ENCODE measurements at regions of chr2 and their contacts with region 1.

Region 1: GRCh38 chr2:176638167-176639015 is 369.1 kb downstream of the MTX2 start:
- DNase-seq: peak; percentile 82
- H3K27ac ChIP-seq: peak overlapping the region; percentile 70
- CTCF ChIP-seq: peak; percentile 84

Region 2: DNA sequence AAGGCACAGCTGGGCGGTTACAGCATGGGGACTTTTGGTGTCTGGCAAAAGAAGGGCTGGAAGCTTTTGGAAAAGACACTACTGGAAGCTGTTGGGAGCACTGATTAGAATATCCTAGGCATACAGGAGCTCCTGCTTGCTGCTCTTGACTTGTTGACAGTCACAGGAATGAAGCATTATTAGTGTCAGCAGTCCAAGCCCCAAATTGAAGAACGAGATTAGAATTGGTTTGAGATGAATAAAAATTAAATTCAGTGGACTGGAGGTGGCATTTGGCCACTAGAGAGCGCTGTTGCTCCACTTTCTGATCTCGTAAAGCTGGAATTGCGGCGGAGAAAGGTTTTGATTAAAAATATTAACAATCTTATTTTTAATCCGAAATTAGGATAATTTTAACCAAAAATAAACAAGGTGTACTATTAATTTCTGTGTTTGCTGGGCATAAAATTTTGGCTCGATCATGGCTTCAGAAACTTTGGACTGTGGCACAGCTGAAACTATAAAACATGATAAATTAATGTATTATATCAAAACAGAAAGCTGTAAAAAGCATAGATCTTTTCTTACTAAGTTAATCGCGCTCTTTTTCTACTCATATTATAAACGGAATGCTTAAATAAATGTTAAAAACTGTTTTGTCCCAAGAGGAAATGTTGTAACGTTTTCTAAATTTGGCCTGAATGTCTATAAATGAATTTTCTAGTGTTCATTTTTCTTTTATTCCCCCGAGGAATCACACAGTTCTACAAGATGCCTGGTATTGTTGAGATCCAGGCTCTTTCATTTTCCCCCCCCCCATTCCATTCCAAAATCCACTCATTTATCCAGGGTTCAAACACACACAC is 511.2 kb before region 1 on chr2:
- CTCF ChIA-PET with region 1: interaction called, 15 read pairs
- POLR2A ChIA-PET with region 1: no interaction called
- DNase-seq: no peak
- H3K27ac ChIP-seq: no peak overlapping the region
- CTCF ChIP-seq: peak; percentile 89

Region 3: DNA sequence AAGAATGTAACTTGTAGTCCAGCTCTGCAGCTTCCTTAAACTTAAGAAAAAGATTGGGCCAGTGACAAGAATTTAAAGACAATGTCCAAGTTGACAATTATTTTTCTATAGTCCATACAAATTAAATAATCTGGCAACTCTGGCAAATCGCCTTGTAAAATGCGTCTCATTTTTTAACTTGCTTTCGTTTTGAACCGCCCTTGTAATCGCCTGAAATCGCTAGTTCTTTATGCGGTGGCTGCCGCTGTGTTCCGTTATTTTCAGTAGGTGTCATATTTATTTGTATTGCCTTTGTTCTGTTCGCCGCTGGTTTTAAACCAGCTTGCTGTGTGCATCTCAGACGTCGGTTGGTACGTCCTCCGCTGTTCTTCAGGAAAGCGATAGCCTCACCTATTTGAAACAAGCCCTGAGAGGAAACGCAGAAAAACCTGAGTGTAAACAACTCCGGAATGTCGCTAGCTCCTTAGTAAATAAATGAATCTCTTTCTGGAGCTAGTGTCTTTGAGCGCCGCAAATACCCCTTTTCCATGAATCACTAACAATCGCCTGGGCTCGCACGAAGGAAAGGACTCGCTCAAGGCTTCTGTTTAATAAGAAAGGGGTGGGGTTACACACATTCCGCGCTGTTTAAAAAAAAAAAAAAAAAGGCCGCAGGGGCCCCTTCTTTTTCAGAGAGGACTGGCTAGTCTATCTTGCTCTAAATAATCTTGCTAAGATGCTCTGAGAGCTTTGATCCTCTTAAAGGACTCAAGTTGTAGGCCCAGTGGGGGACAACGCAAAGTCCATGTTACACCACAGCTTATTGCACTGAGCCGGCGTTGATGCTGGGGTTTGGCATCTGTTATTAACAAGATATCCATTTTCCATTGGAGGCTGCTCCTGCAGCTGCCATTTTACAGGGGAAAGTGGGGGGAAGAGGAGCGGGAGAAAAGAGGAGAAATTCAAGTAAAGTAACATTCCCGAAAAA is 505.9 kb before region 1 on chr2:
- CTCF ChIA-PET with region 1: interaction called, 15 read pairs
- POLR2A ChIA-PET with region 1: no interaction called
- DNase-seq: no peak
- H3K27ac ChIP-seq: no peak overlapping the region
- CTCF ChIP-seq: no peak

Region 4: GRCh38 chr2:176653479-176654443 is 15.4 kb after region 1 on chr2:
- CTCF ChIA-PET with region 1: interaction called, 11 read pairs
- POLR2A ChIA-PET with region 1: no interaction called
- DNase-seq: peak; percentile 65
- H3K27ac ChIP-seq: no peak overlapping the region
- CTCF ChIP-seq: peak; percentile 86